Mammary epithelial cell (primary cell): ENCODE measurements at regions of chr12 and their contacts with region 1.

Region 1: DNA sequence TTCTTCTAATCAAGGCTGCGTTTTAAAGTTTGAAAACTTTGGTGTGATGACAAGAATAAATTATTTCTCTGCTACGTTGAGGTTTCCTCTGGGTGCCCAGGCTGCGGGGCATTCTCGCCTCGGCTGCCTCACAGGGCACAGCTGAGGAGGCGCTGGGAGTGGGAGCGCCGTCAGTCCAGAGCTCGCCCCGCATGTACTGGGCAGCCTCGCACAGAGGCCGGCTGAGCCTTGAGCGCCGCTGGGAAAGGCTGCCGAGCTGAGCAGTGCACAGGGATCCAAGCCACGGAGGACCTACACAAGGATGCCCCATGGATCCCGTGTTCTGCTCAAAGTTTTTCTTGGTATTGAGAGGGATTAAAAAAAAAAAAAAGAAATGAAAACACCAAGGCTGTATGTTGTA is 11.6 kb downstream of the RFX4 start:
- DNase-seq: no peak
- H3K4me3 ChIP-seq: no peak overlapping the region
- H3K27ac ChIP-seq: no peak overlapping the region
- H3K4me1 ChIP-seq: no peaks in the 10 kb centered on the region
- H3K27me3 ChIP-seq: peaks cover 2% of the 10 kb centered on the region
- CTCF ChIP-seq: no peak

Region 2: GRCh38 chr12:106527356-106527755 is 67.1 kb before region 1 on chr12:
- CTCF ChIA-PET with region 1: no interaction called
- dilution Hi-C with region 1: no loop called
- in situ Hi-C with region 1: no loop called
- intact Hi-C with region 1: no loop called
- DNase-seq: no peak
- H3K4me3 ChIP-seq: no peak overlapping the region
- H3K27ac ChIP-seq: no peak overlapping the region
- H3K4me1 ChIP-seq: no peaks in the 10 kb centered on the region
- H3K27me3 ChIP-seq: no peaks in the 10 kb centered on the region
- CTCF ChIP-seq: no peak

Region 3: DNA sequence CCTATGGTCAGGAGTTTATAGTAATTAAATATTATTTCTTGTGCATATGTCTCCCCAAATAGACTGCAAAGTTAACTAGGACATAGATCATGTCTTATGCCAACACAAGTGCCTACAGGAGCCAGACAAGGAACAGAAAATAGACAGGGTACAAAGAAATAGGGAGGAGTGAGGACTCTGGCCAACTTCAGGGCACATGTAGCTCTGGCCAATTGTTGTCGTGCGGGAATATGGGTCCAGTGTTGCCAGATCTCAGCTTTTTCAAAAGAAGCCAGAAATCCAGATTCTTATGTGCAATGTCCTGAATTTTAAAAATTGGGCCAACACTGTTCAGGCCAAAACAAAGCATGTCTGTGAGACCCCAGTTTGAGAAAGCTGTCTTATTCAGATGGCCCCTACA is 57.1 kb after region 1 on chr12:
- CTCF ChIA-PET with region 1: no interaction called
- dilution Hi-C with region 1: no loop called
- in situ Hi-C with region 1: loop called in 1 of 2 experiments (anchors 10 kb)
- intact Hi-C with region 1: no loop called
- DNase-seq: no peak
- H3K4me3 ChIP-seq: no peak overlapping the region
- H3K27ac ChIP-seq: no peak overlapping the region
- H3K4me1 ChIP-seq: peaks cover 3% of the 10 kb centered on the region
- H3K27me3 ChIP-seq: no peaks in the 10 kb centered on the region
- CTCF ChIP-seq: no peak